ENCODE measurements at regions of chr20 and their contacts with region 1.

Region 1: DNA sequence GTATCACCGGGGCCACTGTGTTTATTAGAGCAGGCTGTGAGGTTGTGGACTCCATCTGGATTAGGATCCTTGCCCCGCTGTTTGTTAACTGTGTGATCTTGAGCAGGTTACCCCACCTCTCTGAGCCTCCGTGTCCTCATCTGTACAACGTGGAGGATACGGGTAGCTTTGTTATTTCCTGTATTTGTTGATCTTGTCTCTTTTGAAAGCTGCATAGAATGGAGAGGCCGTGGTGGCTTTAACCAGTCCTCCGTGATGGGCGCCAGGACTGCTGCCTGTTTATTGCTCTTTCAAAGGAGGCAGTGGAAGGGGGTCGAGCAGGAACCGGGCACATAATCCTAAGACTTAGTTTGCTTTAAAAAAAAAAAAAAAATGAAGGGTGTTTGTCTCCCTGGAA is 22.9 kb downstream of the BCAS4 start:
- DNase-seq: no peak
- H3K4me3 ChIP-seq: no peak overlapping the region
- H3K27ac ChIP-seq: peak overlapping the region in 1 of 2 donors; percentile 51
- H3K4me1 ChIP-seq: no peaks in the 10 kb centered on the region
- H3K27me3 ChIP-seq: no peaks in the 10 kb centered on the region
- CTCF ChIP-seq: no peak
- POLR2A ChIP-seq: no peak

Region 2: GRCh38 chr20:50929299-50930138 is 111.7 kb after region 1 on chr20:
- intact Hi-C with region 1: loop called (anchors 1 kb)
- DNase-seq: peak; percentile 91
- H3K4me3 ChIP-seq: peak overlapping the region; percentile 78 to 89
- H3K27ac ChIP-seq: peak overlapping the region; percentile 69 to 98
- H3K4me1 ChIP-seq: peaks cover 5% of the 10 kb centered on the region
- H3K27me3 ChIP-seq: no peaks in the 10 kb centered on the region
- CTCF ChIP-seq: peak; percentile 70 to 93 (median 84)
- POLR2A ChIP-seq: no peak